Brain microvascular endothelial cell (primary cell): ENCODE measurements at regions of chr19 and their contacts with region 1.

Region 1: DNA sequence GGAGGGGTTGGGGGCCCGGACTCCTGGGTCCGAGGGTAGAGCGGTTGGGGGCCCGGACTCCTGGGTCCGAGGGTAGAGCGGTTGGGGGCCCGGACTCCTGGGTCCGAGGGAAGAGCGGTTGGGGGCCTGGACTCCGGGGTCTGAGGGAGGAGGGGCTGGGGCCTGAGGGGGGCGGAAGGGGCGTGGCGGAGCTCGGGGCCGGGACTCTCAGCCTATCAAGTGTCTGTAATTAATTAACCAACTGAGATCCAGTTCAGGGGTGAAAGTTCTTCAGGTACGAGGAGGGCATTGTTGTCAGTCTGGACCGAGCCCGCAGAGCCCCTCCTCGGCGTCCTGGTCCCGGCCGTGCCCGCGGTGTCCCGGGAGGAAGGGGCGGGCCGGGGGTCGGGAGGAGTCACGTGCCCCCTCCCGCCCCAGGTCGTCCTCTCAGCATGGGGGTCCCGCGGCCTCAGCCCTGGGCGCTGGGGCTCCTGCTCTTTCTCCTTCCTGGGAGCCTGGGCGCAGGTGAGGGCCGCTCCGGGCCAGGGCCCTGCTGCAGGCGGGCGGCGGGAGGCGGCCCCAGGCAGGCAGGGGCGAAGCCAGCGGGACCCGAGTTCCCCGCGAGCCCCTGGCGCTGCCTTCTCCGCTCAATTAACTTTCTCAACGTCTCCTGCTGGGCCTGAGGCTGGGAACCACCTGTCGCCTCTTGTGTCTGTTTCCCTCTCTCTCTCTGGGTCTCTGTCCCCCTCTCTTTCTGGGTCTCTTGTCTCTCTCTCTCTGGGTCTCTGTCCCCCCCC is 697 bp downstream of the FCGRT start:
- DNase-seq: no peak
- H3K4me3 ChIP-seq: peak overlapping the region; percentile 66
- H3K27ac ChIP-seq: no peak overlapping the region
- H3K27me3 ChIP-seq: no peaks in the 10 kb centered on the region
- CTCF ChIP-seq: no peak

Region 2: DNA sequence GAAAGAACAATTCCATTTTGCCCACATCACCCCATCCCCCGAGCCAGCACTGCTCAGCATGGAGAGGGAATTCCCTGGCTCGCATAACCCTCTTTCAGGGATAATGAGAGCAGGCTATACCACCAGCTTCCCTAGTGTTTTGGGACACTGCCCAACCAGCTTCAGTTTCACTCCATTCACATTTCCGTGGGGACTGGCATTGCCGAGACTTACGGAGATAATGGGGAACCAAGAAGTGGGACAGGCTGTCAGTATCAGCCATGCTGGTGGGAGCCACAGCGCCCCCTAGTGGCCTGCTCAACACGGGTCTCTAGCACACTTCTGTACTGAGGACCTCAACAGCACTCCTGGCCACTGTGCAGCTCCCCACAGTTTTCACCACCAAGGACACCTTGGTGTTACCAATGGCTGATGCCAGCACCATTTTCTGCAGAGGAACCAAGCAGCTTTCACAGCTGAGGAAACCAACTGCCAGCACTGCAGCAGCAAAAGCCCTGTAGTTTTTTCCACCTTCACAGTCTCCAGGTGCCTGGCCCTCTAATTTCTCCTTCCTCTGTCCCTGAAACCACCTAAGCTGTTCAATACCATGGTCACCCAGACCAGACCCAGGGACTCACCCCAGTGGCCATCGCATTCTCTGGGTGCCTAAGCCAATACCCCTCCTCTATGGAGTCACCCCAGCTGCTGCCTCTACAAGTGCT is 211.8 kb before region 1 on chr19:
- in situ Hi-C with region 1: no loop called
- DNase-seq: peak; percentile 72
- H3K4me3 ChIP-seq: peak overlapping the region; percentile 7
- H3K27ac ChIP-seq: no peak overlapping the region
- H3K27me3 ChIP-seq: no peaks in the 10 kb centered on the region
- CTCF ChIP-seq: peak; percentile 96

Region 3: DNA sequence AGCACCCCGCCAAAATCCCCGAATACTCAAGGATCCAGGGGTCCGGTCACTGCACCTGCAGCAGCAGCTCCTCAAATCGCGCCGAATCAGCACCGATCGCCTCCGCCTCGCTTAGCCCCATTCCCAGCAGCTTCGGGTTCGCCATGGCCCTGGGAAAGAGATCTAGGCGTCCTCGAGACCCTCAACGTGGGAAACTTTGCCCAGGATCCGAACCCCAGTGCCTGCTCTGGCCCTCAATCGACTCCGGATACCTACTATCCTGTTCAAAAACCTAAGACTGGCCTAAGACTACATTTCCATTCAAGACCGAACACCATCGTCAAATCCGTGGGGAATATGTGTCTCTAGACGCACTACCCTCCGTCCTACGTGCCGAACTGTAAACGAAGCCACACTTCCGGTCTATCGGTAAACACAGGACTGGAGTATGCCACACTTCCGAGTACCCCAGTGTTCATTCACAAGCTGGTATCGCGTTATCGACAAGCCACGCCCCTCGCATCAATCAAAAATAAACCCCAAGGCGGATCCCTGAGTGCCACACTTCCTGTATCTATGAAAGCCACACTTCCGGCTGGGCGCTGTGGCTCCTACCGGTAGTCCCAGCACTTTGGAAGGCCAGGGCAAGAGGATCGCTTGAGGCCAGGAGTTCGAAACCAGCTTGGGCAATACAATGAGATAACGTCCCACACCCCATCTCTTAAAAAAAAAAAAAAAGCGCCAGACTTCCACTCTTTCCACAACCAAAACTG is 61.6 kb before region 1 on chr19 and contains the start of gene PIH1D1:
- in situ Hi-C with region 1: no loop called
- DNase-seq: peak; percentile 100
- H3K4me3 ChIP-seq: peak within 1 kb of the TSS; percentile 95
- H3K27ac ChIP-seq: peak within 1 kb of the TSS; percentile 85
- H3K27me3 ChIP-seq: no peaks in the 10 kb centered on the region
- CTCF ChIP-seq: peak; percentile 47

Region 4: GRCh38 chr19:49567861-49568441 is 54.8 kb after region 1 on chr19:
- in situ Hi-C with region 1: loop called (anchors 10 kb)
- DNase-seq: no peak
- H3K4me3 ChIP-seq: no peak overlapping the region
- H3K27ac ChIP-seq: no peak overlapping the region
- H3K27me3 ChIP-seq: no peaks in the 10 kb centered on the region
- CTCF ChIP-seq: no peak

Region 5: DNA sequence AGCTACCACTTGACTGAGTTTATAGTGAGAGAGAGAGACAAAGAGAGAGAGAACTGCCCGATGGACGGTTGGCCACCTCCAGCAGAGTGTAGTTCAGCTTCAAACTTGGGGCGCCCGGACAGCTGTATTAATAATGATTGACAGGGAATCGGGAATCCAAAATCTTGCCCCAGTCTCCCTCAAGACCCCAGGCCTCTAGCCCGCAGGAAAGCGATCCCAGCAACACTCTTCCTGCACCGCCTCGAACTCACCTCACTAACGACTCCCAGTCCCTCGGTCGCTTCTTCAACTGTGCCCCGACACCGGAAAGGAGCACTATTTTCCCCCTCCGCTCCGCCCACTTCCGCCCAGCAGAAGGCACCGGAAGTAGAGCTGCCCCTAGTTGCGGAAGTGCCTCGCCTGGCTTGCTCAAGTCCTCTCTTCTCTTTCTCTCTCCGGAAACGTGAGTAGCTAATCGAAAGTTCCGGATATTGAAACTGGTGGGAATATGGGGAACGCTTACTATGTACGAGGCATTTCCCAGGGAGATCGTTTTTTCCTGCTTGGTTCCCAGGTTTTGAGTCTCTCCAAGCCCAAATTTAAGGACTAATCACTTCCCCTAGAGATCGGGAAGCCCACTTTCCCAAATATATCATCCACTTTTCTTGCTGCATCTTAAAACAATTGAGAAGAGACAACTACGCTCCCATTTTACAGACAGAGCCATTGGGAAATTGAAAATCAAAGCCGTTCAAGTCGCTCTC is 67.3 kb after region 1 on chr19 and contains the start of gene NOSIP:
- in situ Hi-C with region 1: no loop called
- DNase-seq: peak; percentile 92
- H3K4me3 ChIP-seq: peak within 1 kb of the TSS; percentile 91
- H3K27ac ChIP-seq: peak within 1 kb of the TSS; percentile 23
- H3K27me3 ChIP-seq: no peaks in the 10 kb centered on the region
- CTCF ChIP-seq: no peak